ENCODE measurements at regions of chr7 and their contacts with region 1.

Region 1: DNA sequence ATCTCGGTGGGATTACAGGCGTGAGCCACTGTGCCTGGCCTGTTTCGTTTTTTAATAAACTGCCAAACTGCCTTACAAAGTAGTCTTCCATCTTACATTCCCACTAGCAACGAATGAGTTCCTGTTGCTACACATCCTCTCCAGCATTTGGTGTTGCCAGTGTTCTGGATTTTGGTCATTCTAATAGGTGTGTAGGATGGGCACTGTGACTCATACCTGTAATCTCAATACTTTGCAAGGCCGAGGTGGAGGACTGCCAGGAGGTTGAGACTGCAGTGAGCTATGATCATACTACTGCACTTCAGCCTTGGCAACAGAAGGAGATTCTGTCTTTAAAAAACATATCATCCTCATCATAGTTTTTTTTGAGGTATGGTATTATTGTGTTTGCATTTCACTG is 21.4 kb upstream of the RSBN1L start:
- DNase-seq: no peak
- CTCF ChIP-seq: no peak

Region 2: GRCh38 chr7:77570330-77571011 is 104.4 kb before region 1 on chr7:
- CTCF ChIA-PET with region 1: no interaction called
- POLR2A ChIA-PET with region 1: no interaction called
- DNase-seq: no peak
- CTCF ChIP-seq: no peak

Region 3: DNA sequence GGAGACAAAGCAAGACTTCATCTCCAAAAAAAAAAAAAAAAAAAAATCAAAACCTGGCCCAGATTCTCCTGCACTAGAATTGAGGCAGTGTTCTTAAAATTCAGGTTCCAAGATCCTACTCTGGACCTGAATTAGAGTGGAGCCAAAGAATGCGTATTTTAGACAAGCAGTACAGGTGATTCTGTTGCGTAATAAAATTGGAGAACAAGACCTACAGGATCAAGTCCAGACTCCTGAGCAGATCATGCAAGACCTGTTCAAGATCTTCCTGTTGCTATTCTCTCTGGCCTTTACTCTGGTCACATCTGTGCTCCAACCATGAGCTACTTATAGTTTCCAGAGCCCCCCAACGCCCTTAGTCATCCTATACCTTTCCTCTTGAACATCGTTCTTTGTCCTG is 30.1 kb before region 1 on chr7:
- CTCF ChIA-PET with region 1: interaction called, 3 read pairs
- POLR2A ChIA-PET with region 1: interaction called, 10 read pairs
- DNase-seq: no peak
- CTCF ChIP-seq: no peak

Region 4: GRCh38 chr7:77657427-77658224 is 17.3 kb before region 1 on chr7:
- CTCF ChIA-PET with region 1: interaction called, 20 read pairs
- POLR2A ChIA-PET with region 1: no interaction called
- DNase-seq: peak; percentile 51
- CTCF ChIP-seq: peak; percentile 53